ENCODE measurements at regions of chr1 and their contacts with region 1.

Region 1: DNA sequence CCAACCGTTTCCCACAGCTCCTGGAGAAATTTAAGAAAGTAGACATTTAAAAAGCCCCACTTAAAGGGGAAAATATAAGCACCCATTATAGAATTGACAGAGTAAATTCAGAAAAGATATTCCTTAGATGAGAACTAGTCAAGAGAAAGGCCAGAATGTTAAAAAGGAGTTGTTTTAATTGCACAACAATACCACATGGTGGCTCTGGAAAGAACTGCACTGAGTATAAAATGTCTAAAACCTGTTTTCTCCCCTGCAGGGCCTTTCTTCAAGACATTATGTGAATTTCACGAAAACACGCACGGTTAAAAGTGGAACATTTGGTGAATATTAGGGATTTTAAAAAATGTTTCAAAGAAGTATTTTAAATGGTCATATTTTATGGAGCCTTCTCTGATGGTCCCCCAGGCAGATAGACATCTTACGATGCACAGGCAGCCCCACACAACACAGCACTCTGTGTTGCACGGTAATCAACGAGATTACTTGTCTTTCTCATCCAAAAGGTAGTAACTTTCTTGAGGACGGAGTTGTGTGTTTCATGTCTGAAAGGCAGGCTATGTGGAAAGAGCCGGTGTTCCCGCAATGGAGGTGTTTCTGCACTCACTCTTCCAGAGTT is 101.9 kb downstream of the PRRX1 start:
- DNase-seq: no peak
- ATAC-seq: peak; percentile 45 to 79

Region 2: GRCh38 chr1:170010443-170010842 is 755.4 kb before region 1 on chr1:
- intact Hi-C with region 1: loop called in 1 of 2 experiments (anchors 10 kb)
- DNase-seq: peak; percentile 25
- ATAC-seq: no peak

Region 3: DNA sequence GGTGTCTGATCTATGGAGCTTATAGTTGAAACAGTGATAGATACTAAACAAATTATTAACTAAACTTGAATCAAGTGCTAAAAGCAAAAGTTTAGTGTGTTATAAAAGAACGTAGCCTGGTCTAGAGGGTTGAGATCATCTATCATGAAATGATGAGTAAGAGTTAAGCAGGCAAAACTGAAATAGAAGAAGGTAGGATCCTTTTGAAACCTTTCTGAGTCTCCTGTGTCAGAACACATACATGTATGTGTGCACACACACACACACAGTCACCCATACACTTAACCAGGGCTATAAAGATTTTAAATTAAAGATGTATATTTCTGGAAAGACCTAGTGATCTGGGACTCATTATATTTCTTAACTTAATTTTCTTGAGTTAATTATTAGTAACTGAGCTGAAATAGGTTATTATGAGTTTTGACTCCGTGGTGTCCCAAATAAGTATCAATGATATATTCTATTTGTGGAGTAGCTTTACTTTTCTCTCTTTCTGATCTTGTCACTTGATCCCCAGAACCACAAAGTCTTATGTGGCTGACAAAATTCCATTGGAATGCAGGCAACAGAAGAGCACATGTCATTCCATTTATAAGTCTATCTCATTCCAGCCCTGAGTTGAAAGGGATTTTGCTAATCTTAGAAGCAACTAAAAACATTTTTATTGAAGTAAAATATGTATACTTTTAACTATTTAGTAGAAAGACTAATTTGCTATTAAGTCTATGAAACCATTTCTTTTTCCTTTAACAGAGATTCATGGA is 31.2 kb before region 1 on chr1:
- intact Hi-C with region 1: loop called in 1 of 2 experiments (anchors 2 kb)
- DNase-seq: no peak
- ATAC-seq: peak in 1 of 2 donors; percentile 22

Measured in left cardiac atrium (tissue), 4 donors.